Dorsolateral prefrontal cortex (tissue), 120 donors: ENCODE measurements at regions of chr7 and their contacts with region 1.

Region 1: DNA sequence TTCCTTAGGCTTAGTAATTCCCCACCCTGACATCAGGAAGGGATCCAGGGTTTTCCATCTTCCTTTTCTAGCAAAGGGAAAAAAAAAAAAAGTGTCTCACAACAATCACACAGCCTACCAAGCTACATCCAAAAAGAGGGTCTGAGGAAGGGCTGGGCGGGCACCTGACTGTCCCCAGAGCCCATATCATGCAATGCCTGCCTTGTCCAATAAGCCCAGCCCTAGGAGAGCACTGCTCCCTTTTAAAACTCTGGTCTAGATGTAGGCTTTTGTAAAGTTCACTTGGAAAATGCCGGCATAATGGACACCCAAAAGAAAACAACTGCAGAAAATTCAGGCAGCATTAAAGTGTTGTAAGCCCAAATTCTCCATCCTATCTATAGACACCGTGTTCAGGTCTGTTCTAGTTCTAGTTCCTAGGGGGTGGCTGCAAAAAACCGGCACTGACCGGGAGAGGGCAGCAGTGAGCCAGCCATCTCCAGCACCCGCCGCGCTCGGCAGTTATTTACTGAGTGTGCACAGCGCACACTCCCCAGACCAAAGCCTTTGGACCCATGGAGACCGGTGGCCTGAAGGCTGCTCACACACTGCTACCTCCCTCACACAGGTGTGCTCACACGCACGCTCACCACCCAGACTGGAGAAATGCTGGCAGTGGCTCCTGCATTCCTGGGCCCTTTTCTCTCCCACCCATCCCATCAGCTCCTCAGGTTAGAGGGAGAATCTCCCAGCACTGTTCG is 48.7 kb downstream of the PODXL start:
- DNase-seq: peak; percentile 83 to 93 (median 88)
- H3K4me3 ChIP-seq: peak overlapping the region in 22 of 59 donors; percentile 6 to 39 (median 24)
- H3K27ac ChIP-seq: peak overlapping the region in 15 of 59 donors; percentile 2 to 75 (median 14)
- H3K27me3 ChIP-seq: no peaks in the 10 kb centered on the region
- CTCF ChIP-seq: peak; percentile 79 to 98 (median 95)

Region 2: DNA sequence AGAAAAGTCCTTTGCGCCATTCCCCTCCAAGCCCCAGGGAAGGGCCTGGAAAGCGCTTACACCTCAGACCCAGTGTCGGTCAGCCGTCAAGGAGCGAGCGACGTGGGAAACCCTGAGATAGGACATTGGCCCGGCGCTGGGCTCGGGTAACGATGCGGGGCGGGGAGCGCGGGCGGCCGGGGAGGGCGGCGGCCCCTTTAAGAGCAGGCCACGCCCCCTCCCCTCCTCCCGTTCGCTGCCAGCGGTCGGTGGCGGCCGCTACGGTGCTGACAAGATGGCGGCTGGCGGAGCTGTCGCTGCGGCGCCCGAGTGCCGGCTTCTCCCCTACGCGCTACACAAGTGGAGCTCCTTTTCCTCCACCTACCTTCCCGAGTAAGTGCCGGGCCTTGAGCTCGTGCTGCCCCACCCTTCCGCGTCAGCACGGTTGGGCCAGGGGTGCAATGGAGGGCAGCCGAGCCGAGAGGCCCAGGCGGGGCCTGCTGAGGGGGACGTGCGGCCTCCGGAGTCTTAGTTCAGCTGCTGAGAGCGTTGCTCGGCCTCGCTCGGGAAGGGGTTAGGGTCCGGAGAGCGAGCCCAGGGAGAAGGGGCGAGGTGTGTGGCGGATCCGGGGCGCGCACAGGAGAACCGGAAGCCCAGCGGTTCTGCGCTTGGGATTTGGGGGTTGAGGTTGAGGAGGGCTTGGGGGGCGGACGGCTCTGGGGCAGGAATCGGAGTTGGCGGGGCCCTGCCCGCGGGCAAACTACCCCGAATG is 180.0 kb before region 1 on chr7 and contains the start of gene MKLN1:
- intact Hi-C with region 1: loop called in 1 of 2 experiments (anchors 10 kb)
- DNase-seq: peak; percentile 82 to 94 (median 89)
- H3K4me3 ChIP-seq: peak within 1 kb of the TSS; percentile 63 to 100 (median 94)
- H3K27ac ChIP-seq: peak within 1 kb of the TSS; percentile 89 to 100 (median 98)
- H3K27me3 ChIP-seq: no peaks in the 10 kb centered on the region
- CTCF ChIP-seq: peak in 22 of 56 donors; percentile 6 to 53 (median 24)
- total RNA-seq, gene MKLN1: 68.7 to 162 (median 107) TPM

Region 3: DNA sequence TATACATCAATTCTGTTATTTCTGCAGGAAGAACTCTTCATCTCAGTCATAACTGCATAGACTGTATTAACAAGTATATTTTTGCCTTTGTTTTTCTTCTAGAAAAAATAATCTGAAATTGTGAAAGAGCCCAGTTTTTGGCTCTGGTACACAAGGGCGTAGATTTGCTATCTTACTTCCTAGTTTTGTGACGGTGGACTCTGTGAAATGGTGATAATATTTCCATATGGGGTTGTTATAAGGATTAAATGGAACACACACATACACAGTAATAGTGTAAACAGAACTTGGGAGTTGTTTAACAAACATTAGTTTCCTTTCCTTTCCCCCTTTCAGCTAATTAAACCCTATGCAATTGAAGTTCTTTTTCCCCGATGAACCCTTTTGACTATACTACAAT is 71.4 kb before region 1 on chr7:
- intact Hi-C with region 1: loop called in 1 of 2 experiments (anchors 5 kb)
- DNase-seq: no peak
- H3K4me3 ChIP-seq: no peak overlapping the region
- H3K27ac ChIP-seq: peak overlapping the region in 3 of 59 donors; percentile 5 to 36 (median 19)
- H3K27me3 ChIP-seq: no peaks in the 10 kb centered on the region
- CTCF ChIP-seq: no peak

Region 4: GRCh38 chr7:131488361-131488760 is 19.4 kb before region 1 on chr7:
- intact Hi-C with region 1: no loop called
- DNase-seq: no peak
- H3K4me3 ChIP-seq: no peak overlapping the region
- H3K27ac ChIP-seq: no peak overlapping the region
- H3K27me3 ChIP-seq: no peaks in the 10 kb centered on the region
- CTCF ChIP-seq: peak in 15 of 56 donors; percentile 8 to 35 (median 27)

Region 5: GRCh38 chr7:131654668-131655326 is 147.0 kb after region 1 on chr7:
- intact Hi-C with region 1: loop called (anchors 1 kb)
- DNase-seq: peak; percentile 79 to 95 (median 88)
- H3K4me3 ChIP-seq: no peak overlapping the region
- H3K27ac ChIP-seq: no peak overlapping the region
- H3K27me3 ChIP-seq: peaks cover 0 to 5% (median 0%) of the 10 kb centered on the region in 45 donors
- CTCF ChIP-seq: peak; percentile 68 to 97 (median 91)